Calu3 (cell line): ENCODE measurements at regions of chr3 and their contacts with region 1.

Region 1: DNA sequence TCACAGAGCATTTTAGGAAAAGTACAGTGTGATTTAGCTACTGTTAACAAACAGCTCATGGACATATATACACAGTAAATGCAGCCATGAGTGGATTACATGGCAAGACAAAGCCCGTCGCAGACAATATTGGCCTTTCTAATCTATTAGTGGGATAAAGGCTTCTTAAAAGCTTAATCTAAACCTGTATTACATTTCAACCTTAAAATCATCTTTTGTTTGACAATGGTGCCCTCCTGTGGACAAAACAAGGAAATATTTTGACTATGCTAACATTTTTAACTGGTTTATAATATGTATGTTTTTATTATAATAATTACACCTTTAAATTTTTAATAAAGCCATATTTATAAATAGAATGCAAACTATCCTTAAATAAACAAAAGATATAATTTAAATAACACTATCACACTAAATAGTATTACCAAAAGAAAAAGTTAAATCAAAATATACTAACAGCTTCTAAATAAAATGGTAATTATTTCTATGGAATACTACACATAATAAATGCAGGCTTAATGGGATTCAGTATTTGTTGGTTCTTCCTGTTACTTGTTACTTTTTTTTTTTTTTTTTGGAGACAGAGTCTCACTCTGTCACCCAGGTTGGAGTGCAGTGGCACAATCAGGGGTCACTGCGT is 38.6 kb downstream of the TAFA4 start:
- DNase-seq: peak; percentile 11
- H3K4me3 Mint-ChIP-seq: no peak overlapping the region
- H3K27ac Mint-ChIP-seq: no peak overlapping the region
- H3K4me1 Mint-ChIP-seq: no peaks in the 10 kb centered on the region
- H3K27me3 Mint-ChIP-seq: peaks cover 42% of the 10 kb centered on the region
- CTCF ChIP-seq: peak; percentile 24

Region 2: DNA sequence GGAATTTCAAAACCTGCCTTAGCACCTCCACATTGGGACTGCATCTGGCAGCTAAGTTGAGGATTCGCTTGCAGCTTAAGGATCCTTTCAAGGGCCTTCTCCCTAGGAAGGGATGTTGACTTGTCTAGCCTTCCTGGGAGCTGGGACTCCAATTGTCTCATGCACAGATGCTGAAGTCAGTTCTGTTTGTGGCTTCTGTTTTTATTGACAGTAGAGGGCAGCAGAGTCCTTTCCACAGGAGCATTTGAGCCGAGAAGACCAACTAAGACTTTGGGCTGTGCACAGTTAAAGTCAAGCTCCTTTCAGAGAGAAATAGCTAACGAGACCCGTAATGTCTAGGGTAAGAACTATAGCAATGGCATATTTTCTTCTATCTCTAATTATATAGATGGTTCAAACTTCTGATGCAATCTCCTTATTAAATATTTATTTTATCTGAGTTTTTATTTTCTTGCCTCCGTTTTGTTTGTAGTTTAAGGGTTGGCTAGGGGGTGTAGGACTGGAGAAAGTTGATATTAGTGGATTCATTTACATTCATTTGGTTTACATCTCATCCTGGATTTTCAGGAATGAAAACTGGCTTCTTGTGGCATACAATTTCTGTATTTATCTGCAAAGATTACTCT is 1955.3 kb before region 1 on chr3:
- CTCF ChIA-PET with region 1: no interaction called
- intact Hi-C with region 1: loop called (anchors 1 kb)
- DNase-seq: peak; percentile 40
- H3K4me3 Mint-ChIP-seq: no peak overlapping the region
- H3K27ac Mint-ChIP-seq: no peak overlapping the region
- H3K4me1 Mint-ChIP-seq: no peaks in the 10 kb centered on the region
- H3K27me3 Mint-ChIP-seq: no peaks in the 10 kb centered on the region
- CTCF ChIP-seq: peak; percentile 65

Region 3: DNA sequence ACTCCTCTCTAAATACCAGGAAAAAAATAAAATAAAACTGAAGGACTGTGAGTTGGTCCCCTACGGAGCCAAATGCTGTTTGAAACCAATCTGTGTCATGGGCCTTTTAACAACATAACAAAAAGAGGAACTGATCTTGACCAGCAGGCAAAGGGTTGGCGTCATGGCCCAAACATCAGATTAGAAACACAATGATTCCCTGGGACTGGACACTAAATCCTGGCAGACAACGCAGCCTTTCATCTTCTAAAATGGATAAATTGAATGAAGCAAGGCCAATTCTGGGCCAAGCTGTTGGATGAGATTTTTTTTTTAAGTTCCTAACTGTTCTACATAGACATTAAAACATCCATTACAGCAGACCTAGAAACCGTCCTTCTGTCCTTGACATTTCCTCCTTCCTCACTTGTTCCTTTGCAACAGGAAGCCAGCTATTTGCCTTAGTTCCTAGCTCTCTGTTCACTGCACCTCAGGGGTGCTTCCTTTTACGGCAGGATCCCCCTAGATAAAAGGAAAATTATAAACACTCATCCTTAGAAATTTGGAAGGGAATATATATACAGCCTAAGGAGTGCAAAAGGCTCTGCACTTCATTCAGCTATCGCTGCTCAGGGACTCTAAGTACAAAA is 60.2 kb after region 1 on chr3:
- CTCF ChIA-PET with region 1: no interaction called
- intact Hi-C with region 1: no loop called
- DNase-seq: no peak
- H3K4me3 Mint-ChIP-seq: no peak overlapping the region
- H3K27ac Mint-ChIP-seq: no peak overlapping the region
- H3K4me1 Mint-ChIP-seq: no peaks in the 10 kb centered on the region
- H3K27me3 Mint-ChIP-seq: peaks cover 53% of the 10 kb centered on the region
- CTCF ChIP-seq: no peak

Region 4: DNA sequence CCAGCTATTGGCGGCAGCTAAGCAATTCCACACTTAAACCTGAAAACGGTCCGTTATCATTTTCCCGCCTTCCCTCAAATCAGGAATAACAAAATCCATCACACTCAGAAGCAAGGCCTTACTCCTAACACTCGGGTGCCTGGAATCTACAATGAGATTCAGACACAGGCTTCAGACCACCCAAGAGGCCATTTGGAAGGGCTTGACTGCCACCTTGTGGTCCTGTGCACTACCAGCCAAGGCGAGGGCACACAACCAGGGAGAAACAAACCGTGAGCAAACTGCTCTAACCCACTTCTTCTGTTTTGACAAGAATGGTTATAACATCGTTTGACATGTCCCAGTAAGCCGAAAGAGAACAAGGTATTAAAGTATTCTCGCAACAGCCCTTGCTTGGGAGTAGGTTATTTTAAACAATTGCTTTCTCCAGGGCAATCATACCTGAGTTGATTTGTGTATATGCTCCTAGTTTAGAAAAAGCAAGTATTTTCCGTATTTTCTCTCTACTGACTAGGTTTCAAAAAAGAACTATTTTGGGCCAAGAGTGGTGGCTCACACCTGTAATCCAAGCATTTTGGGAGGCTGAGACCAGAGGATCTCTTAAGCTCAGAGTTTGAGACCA is 78.7 kb after region 1 on chr3:
- CTCF ChIA-PET with region 1: interaction called, 3 read pairs
- intact Hi-C with region 1: loop called (anchors 1 kb)
- DNase-seq: peak; percentile 67
- H3K4me3 Mint-ChIP-seq: no peak overlapping the region
- H3K27ac Mint-ChIP-seq: no peak overlapping the region
- H3K4me1 Mint-ChIP-seq: no peaks in the 10 kb centered on the region
- H3K27me3 Mint-ChIP-seq: peaks cover 46% of the 10 kb centered on the region
- CTCF ChIP-seq: peak; percentile 66

Region 5: DNA sequence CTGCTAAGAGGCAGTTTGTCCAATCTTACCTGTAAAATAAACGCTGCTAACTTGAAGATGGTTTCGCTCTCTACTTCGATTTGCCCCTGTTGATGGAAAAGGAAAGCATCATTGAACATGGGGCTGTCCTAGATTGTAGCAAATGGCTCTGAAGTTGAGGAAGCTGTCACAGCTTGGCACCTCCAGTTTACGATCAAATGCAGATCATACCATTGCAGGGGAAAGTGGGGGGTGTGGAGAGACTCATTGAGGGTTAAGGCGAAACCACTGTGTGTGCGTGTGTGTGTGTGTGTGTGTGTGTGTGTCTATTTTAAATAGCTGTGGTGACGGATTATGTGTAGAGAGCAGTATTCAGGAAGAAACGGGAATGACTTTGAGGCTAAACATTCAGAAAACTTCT is 356.3 kb after region 1 on chr3:
- CTCF ChIA-PET with region 1: no interaction called
- intact Hi-C with region 1: no loop called
- DNase-seq: peak; percentile 78
- H3K4me3 Mint-ChIP-seq: peak overlapping the region; percentile 83
- H3K27ac Mint-ChIP-seq: peak overlapping the region; percentile 85
- H3K4me1 Mint-ChIP-seq: peaks cover 50% of the 10 kb centered on the region
- H3K27me3 Mint-ChIP-seq: no peaks in the 10 kb centered on the region
- CTCF ChIP-seq: no peak